ENCODE measurements at regions of chr10 and their contacts with region 1.

Region 1: GRCh38 chr10:133143200-133143533 is 16.9 kb upstream of the KNDC1 start:
- DNase-seq: no peak
- ATAC-seq: no peak
- H3K4me3 Mint-ChIP-seq: no peak overlapping the region
- H3K27ac Mint-ChIP-seq: no peak overlapping the region
- H3K4me1 Mint-ChIP-seq: peaks cover 32% of the 10 kb centered on the region
- H3K27me3 Mint-ChIP-seq: peaks cover 5% of the 10 kb centered on the region; the same call in 1 of the 2 replicates
- CTCF ChIP-seq: no peak

Region 2: DNA sequence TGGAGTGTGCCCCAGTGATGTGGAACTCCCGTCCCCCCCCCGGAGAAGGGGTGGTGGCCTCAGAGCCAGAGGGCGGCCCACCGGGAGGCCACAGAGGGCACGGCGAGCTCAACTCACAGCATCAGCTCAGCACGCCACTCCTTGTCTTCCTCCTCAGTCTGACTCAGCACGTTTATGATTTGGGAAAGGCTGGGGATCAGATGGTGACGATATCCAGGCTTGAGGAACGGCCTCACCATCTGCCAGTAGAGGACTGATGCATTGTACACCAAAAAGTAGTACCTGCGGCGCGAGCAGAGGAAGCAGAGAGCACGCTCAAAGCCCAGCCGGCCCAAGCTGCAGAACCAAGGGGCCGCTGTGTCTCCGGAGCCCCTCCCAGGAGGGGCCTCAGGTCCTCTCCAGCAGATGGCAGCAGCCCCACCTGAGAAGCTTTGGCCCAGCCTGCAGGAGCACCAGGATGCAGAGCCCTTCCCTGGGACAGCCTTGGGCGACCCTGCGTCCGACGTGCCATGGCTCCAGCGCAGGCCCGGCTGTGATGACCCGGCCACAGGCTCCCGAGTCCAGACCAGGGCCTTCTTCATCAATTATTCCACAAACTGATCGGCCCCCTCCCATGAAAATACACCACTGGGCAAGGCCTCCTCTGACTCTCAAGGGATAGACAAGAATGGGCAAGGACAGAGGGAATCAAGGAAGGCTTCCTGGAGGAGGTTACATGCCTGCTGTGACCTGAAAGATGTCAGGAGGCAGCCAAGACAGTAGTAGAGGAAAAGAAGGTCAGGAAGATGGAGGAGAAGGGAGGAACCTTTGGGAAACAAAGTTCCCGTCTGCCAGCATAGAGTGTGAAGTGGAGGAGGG is 204.5 kb before region 1 on chr10:
- CTCF ChIA-PET with region 1: interaction called, 10 read pairs
- POLR2A ChIA-PET with region 1: no interaction called
- DNase-seq: peak; percentile 78
- ATAC-seq: peak; percentile 90
- H3K4me3 Mint-ChIP-seq: no peak overlapping the region
- H3K27ac Mint-ChIP-seq: peak overlapping the region; percentile 54
- H3K4me1 Mint-ChIP-seq: peaks cover 3% of the 10 kb centered on the region; the same call in 1 of the 2 replicates
- H3K27me3 Mint-ChIP-seq: peaks cover 3% of the 10 kb centered on the region; the same call in 1 of the 2 replicates
- CTCF ChIP-seq: no peak; the same call in 1 of the 2 replicates

Region 3: DNA sequence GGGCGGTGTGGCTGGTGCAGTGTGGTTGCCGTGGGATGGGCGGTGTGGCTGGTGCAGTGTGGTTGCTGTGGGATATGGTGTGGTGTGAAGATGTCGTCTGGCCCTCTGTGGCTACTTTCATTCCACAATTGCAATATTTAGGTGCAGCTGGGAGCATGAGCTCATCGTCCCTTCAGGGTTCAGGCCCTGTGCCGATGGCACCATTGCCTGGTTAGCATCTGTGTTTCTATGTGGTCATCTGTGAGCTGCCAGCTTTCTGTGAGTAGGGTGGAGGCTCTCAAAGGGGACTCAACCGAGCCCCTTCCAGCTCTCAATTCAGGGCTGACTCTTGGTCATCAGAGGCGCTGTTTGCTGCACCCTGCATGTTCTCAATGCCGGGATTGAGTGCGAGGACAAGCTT is 51.9 kb before region 1 on chr10:
- CTCF ChIA-PET with region 1: no interaction called
- POLR2A ChIA-PET with region 1: no interaction called
- DNase-seq: no peak
- ATAC-seq: no peak
- H3K4me3 Mint-ChIP-seq: no peak overlapping the region
- H3K27ac Mint-ChIP-seq: no peak overlapping the region
- H3K4me1 Mint-ChIP-seq: peaks cover 2% of the 10 kb centered on the region; the same call in 1 of the 2 replicates
- H3K27me3 Mint-ChIP-seq: peaks cover 38% of the 10 kb centered on the region
- CTCF ChIP-seq: no peak

Region 4: GRCh38 chr10:133127291-133128194 is 15.6 kb before region 1 on chr10:
- CTCF ChIA-PET with region 1: interaction called, 11 read pairs
- POLR2A ChIA-PET with region 1: no interaction called
- DNase-seq: peak; percentile 80
- ATAC-seq: peak; percentile 62
- H3K4me3 Mint-ChIP-seq: no peak overlapping the region
- H3K27ac Mint-ChIP-seq: no peak overlapping the region
- H3K4me1 Mint-ChIP-seq: no peaks in the 10 kb centered on the region
- H3K27me3 Mint-ChIP-seq: no peaks in the 10 kb centered on the region
- CTCF ChIP-seq: no peak

Region 5: DNA sequence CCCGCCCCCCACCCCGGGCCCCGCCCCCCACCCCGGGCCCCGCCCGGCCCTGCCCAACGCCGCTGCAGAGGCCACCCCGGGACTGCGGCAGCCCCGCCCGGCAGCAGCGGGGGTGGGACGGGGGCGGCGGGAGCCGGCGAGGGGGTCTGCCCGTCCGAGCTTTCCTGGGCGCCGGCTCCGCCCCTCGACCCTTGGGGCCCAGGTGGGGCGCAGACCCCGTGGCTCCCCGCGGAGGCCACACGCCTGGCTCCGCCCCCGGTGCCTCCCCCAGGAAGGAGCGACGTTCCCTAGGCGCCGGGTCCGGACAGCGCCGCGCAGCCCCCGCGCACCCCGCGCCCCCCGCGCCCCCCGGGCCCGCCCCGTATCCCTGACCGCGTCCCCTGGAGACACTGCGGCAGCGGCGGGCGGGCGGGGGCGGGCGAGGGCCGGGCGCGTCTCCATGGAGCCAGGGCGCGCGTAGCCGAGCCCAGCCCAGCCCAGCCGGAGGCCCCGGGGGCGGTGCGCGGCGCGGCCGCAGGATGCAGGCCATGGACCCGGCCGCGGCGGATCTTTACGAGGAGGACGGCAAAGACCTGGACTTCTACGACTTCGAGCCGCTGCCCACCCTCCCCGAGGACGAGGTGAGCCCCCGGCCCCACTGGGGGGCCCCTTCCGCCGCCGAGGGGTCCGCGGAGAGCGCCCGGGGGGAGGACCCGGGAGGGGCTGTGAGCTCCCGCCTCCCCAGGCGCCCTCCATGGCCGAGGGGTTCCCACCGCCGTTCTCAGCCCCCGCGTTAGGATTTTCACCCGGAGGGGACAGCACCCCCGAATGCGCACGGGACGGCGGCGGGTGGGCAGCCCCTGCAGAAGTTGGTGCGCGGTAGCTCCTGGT is 17.0 kb after region 1 on chr10 and contains the start of gene KNDC1:
- CTCF ChIA-PET with region 1: interaction called, 12 read pairs
- POLR2A ChIA-PET with region 1: no interaction called
- DNase-seq: peak; percentile 51
- ATAC-seq: peak; percentile 45
- H3K4me3 Mint-ChIP-seq: peak within 1 kb of the TSS; percentile 66
- H3K27ac Mint-ChIP-seq: no peak within 1 kb of the TSS
- H3K4me1 Mint-ChIP-seq: peaks cover 20% of the 10 kb centered on the region
- H3K27me3 Mint-ChIP-seq: peaks cover 3% of the 10 kb centered on the region
- CTCF ChIP-seq: no peak
- total RNA-seq, gene KNDC1: 25.7 to 26.8 TPM (median 26.6 TPM) in 3 replicates

Region 6: DNA sequence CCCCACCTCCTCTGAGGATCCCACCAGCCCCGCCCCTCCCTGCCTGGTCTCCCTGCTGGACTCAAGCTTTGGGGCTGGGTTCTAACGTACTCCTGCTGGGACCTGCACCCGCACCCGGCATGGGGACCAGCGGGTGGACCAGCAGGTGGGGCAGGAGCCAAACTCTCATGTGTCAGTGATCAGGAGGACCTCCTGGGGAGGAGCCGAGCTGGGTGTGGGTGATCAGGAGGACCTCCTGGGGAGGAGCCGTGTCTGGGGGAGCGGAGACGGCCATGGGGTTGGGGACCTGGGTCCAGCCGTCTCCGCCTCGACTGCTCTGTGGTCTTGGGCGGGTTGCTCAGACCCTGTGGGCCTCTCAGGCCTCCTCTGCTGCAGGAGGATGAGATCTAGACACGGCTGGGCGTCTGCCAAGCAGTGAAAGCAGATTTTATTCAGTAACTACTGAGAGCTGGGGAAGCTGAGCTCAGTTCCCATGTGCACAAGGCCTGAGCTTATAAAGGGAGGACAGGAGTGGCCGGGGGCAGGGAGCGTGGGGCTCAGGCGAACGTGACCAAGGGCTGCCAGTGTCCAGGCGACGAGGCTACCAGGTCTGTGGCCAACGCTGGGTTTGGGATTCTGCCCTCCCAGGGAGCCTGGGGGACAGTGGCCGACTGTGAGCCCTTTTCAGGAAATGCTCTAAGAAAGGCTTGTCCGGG is 53.2 kb after region 1 on chr10:
- CTCF ChIA-PET with region 1: interaction called, 19 read pairs
- POLR2A ChIA-PET with region 1: no interaction called
- DNase-seq: no peak
- ATAC-seq: no peak
- H3K4me3 Mint-ChIP-seq: no peak overlapping the region
- H3K27ac Mint-ChIP-seq: peak overlapping the region; percentile 94
- H3K4me1 Mint-ChIP-seq: no peaks in the 10 kb centered on the region
- H3K27me3 Mint-ChIP-seq: peaks cover 12% of the 10 kb centered on the region
- CTCF ChIP-seq: no peak

Measured in WTC11 (cell line).